Body of pancreas (tissue), 4 donors: ENCODE measurements at regions of chr19 and their contacts with region 1.

Region 1: DNA sequence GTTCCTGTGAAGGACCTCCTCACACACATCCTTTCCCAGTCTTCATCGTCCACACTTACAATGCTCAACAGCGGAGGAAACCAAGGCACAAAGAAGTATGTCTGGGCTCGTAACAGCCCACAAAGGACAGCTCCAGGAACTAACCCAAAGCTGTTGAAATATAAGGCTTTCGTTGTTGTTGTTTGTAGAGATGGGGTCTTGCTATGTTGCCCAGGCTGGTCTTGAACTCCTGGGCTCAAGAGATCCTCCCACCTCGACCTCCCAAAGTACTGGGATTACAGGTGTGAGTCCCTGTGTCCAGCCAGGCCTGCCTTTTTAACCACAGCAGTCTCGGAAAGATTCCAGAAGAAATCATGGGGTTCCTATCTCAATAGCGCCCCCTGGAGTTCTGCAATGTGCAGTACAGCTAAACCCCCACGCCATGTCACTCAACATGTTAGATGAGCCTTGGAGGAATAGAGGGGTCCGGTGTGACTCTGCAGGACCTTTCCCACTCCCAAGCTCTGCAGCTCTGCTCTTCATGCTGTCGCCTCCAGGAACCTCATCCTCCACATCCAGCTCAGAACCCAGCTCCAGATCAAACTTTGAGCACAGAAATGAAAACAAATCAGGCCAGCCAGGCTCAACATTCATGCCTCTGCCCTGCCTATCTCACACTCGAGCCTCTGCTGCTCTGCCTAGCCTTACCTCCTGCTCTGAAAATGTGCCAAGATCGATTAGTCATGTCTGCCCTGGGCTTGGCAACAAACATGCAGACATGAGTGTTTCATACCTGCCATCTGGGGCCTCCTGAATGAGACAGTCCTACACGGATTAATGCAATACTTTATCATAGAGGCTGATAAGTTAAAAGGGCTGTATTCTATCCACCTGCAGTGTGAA is 7.5 kb downstream of the PLA2G4C start:
- DNase-seq: peak in 1 of 4 donors; percentile 21
- ATAC-seq: no peak
- H3K4me3 ChIP-seq: no peak overlapping the region
- H3K27ac ChIP-seq: no peak overlapping the region
- H3K4me1 ChIP-seq: peaks cover 13% of the 10 kb centered on the region
- H3K27me3 ChIP-seq: no peaks in the 10 kb centered on the region
- CTCF ChIP-seq: peak in 6 of 7 experiments; percentile 24 to 47 (median 37)
- POLR2A ChIP-seq: no peak

Region 2: GRCh38 chr19:48158210-48158790 is 55.2 kb after region 1 on chr19:
- intact Hi-C with region 1: loop called (anchors 5 kb)
- DNase-seq: no peak
- ATAC-seq: no peak
- H3K4me3 ChIP-seq: no peak overlapping the region
- H3K27ac ChIP-seq: no peak overlapping the region
- H3K4me1 ChIP-seq: no peaks in the 10 kb centered on the region
- H3K27me3 ChIP-seq: no peaks in the 10 kb centered on the region
- CTCF ChIP-seq: no peak
- POLR2A ChIP-seq: no peak